HepG2 (cell line): ENCODE measurements at regions of chr12 and their contacts with region 1.

Region 1: GRCh38 chr12:65685514-65685913 is 138.8 kb upstream of the HMGA2 start:
- DNase-seq: peak; percentile 24
- ATAC-seq: peak; percentile 60; the same call in 2 of the 3 replicates
- H3K4me3 ChIP-seq: no peak overlapping the region
- H3K27ac ChIP-seq: no peak overlapping the region
- H3K4me1 ChIP-seq: no peaks in the 10 kb centered on the region
- H3K27me3 ChIP-seq: no peaks in the 10 kb centered on the region; a peak in 1 of 5 replicates
- CTCF ChIP-seq: peak; percentile 40
- EP300 ChIP-seq: no peak
- POLR2A ChIP-seq: no peak
- RAD21 ChIP-seq: no peak

Region 2: DNA sequence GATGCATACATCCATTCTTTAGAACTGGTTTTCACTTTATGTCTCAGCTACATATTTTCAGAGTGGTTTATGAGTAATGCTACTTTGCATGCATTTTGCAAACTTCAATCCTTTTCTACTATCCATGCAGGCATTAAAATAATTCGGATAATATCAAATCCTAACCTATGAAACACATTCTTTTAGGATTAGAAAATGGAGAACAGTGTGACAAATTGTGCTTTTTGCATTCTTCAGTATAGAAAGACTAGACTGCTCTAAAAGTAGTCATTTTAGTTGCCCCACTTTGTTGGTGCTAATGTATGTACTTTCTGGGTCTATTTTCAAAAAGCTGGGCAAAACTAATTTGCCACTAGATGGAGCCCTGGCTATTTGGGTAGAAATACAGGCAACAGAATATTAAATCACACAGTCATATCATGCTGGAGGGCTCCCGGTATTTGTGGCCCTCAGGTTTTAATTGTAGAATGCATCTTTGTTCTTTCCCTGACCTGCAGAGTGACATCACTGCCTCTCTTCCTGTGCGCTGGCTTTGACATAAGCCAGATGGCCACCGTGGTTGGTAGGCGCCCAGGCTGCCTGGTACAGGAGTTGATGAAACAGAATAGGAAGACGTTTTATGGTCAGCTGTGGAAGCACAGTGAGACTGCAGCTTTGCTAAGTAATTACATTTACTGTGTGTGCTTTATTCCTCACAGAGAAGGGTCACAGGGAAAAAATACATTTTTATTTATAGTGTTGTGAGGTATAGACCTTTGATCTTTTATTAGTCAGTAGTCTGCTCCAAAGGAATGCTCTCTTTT is 378.9 kb before region 1 on chr12:
- CTCF ChIA-PET with region 1: no interaction called
- POLR2A ChIA-PET with region 1: no interaction called
- in situ Hi-C with region 1: loop called (anchors 25 kb)
- intact Hi-C with region 1: loop called (anchors 5 kb)
- DNase-seq: peak; percentile 37
- ATAC-seq: peak; percentile 66
- H3K4me3 ChIP-seq: no peak overlapping the region
- H3K27ac ChIP-seq: no peak overlapping the region
- H3K4me1 ChIP-seq: peaks cover 6% of the 10 kb centered on the region; the same call in 1 of the 2 replicates
- H3K27me3 ChIP-seq: no peaks in the 10 kb centered on the region
- CTCF ChIP-seq: peak; percentile 75
- EP300 ChIP-seq: no peak
- POLR2A ChIP-seq: no peak
- RAD21 ChIP-seq: peak; percentile 66

Region 3: DNA sequence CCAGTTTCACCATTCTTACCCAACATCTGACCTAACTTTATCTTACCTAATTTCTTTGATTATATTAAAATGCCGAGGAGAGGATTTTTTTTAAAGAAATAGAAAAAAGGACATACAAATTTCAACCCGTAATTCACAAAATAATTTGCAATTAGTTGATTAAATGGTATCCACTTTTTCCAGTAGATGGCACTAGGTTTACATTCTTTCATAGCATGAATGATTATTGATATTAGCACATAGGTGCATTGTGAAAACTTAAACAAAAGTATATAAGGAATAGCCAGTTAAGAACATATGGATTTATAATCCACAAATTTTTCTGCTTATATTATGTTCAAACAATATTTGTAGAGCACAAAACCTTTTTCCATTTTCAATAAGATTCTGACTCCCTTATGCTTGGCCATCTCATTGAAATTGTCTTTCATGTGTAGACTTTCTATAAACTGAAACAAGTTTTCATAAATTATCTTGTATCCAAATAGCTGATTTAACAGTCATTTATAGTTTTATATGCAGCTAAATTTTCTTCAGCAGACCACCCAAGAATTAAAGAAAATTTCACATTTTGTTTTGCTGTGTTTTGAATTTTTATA is 371.7 kb before region 1 on chr12:
- CTCF ChIA-PET with region 1: no interaction called
- POLR2A ChIA-PET with region 1: no interaction called
- in situ Hi-C with region 1: loop called (anchors 25 kb)
- intact Hi-C with region 1: loop called (anchors 5 kb)
- DNase-seq: peak; percentile 28
- ATAC-seq: no peak
- H3K4me3 ChIP-seq: no peak overlapping the region
- H3K27ac ChIP-seq: no peak overlapping the region
- H3K4me1 ChIP-seq: no peaks in the 10 kb centered on the region
- H3K27me3 ChIP-seq: no peaks in the 10 kb centered on the region; a peak in 1 of 5 replicates
- CTCF ChIP-seq: peak; percentile 58
- EP300 ChIP-seq: no peak
- POLR2A ChIP-seq: no peak
- RAD21 ChIP-seq: no peak